ENCODE measurements at regions of chr5 and their contacts with region 1.

Region 1: GRCh38 chr5:42583322-42583721 is 160.1 kb downstream of the GHR start:
- DNase-seq: peak; percentile 78
- H3K4me3 ChIP-seq: no peak overlapping the region
- H3K27ac ChIP-seq: no peak overlapping the region
- H3K4me1 ChIP-seq: peaks cover 5% of the 10 kb centered on the region
- H3K27me3 ChIP-seq: no peaks in the 10 kb centered on the region
- CTCF ChIP-seq: peak; percentile 90 to 92

Region 2: DNA sequence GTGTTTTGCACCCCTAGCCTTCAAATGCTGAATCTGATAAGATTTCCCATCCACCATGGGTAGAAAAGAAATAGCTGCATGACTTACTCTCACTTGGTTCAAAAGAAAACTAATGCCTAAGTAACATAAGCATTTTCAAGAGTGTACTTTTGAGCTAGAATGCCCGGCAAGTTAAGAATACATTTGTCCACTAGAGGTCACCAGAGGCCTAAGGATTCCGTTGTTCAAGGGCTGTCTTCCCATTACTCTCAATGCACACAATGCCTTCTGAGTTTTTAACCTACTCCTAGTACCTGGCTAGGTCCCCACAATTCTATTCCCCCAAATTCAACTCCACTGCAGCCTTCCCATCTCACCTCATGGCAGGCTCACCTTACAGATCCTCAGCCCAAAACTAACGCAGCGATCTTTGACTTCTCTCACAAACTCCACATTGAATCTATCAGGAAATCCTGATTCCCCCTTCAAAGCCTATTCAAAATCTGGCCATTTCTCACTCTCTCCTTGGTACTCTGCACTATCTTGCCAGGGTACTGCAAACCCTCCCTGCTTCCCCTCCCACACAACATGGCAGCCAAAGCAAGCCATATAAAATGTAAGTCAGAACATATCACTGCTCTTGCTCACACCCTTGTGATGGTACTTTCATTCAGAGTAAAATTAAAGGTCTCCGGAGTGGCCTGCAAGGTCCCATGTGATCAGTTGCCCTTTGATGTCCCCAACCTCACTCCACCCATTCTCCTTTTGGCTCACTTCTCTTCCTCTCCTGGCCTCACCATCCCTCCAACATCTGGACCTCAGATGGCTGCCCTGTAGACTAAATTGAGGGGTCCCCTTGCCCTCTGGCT is 726.5 kb before region 1 on chr5:
- CTCF ChIA-PET with region 1: no interaction called
- dilution Hi-C with region 1: no loop called
- in situ Hi-C with region 1: no loop called
- intact Hi-C with region 1: loop called (anchors 10 kb)
- DNase-seq: peak; percentile 47
- H3K4me3 ChIP-seq: no peak overlapping the region
- H3K27ac ChIP-seq: no peak overlapping the region
- H3K4me1 ChIP-seq: no peaks in the 10 kb centered on the region
- H3K27me3 ChIP-seq: no peaks in the 10 kb centered on the region
- CTCF ChIP-seq: peak; percentile 74 to 78

Region 3: DNA sequence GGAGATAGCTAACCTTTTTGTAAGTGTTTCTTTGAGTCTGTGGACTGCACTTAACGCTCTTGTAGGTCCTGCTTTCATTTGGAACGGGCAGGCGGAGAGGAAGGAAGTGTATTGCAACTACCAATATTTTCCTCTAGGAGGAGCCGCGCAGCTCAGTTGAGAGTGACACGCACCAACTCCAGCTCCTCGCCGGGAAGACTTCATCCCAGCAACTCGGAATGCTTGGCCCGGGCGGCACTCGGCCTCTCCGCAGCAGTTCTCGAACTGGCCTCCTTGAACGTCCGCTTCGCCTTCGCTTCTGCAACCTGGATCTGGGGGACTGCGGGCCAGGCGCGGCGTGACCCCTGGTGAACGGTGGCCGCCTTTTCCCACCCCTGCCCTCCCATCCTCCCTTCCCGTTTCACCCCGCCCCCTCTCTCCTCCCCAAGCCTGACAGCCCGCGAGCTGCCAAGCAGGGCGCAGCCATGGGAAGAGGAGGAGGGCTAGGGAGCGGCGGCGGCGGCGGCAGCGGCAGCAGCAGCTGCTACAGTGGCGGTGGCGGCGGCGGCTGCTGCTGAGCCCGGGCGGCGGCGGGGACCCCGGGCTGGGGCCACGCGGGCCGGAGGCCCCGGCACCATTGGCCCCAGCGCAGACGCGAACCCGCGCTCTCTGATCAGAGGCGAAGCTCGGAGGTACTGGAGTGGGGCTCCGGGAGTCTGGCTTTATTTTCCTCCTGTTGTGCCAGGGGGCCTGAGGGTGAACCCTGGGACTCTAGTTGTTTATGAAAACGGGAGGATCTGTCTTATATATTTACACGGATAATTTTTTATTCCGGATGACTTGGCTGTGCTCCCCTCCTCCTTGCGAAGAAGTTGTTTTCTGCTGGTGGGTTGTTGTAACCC is 159.8 kb before region 1 on chr5 and contains the start of gene GHR:
- CTCF ChIA-PET with region 1: interaction called, 9 read pairs
- dilution Hi-C with region 1: no loop called
- in situ Hi-C with region 1: no loop called
- intact Hi-C with region 1: loop called (anchors 1 kb)
- DNase-seq: peak; percentile 84
- H3K4me3 ChIP-seq: peak within 1 kb of the TSS; percentile 49 to 81 (median 58)
- H3K27ac ChIP-seq: no peak within 1 kb of the TSS
- H3K4me1 ChIP-seq: peaks cover 17% of the 10 kb centered on the region
- H3K27me3 ChIP-seq: no peaks in the 10 kb centered on the region
- CTCF ChIP-seq: peak; percentile 48 to 75
- total RNA-seq, gene GHR: 2.8 to 5.5 TPM

Region 4: GRCh38 chr5:42522783-42523182 is 60.5 kb before region 1 on chr5:
- CTCF ChIA-PET with region 1: no interaction called
- dilution Hi-C with region 1: no loop called
- in situ Hi-C with region 1: no loop called
- intact Hi-C with region 1: no loop called
- DNase-seq: no peak
- H3K4me3 ChIP-seq: no peak overlapping the region
- H3K27ac ChIP-seq: no peak overlapping the region
- H3K4me1 ChIP-seq: no peaks in the 10 kb centered on the region
- H3K27me3 ChIP-seq: no peaks in the 10 kb centered on the region
- CTCF ChIP-seq: no peak

Region 5: GRCh38 chr5:42636425-42636824 is 53.1 kb after region 1 on chr5:
- CTCF ChIA-PET with region 1: no interaction called
- dilution Hi-C with region 1: no loop called
- in situ Hi-C with region 1: no loop called
- intact Hi-C with region 1: loop called (anchors 5 kb)
- DNase-seq: peak; percentile 9
- H3K4me3 ChIP-seq: no peak overlapping the region
- H3K27ac ChIP-seq: no peak overlapping the region
- H3K4me1 ChIP-seq: peaks cover 12% of the 10 kb centered on the region
- H3K27me3 ChIP-seq: no peaks in the 10 kb centered on the region
- CTCF ChIP-seq: peak; percentile 37 to 57

Region 6: GRCh38 chr5:42767491-42768105 is 184.3 kb after region 1 on chr5:
- CTCF ChIA-PET with region 1: interaction called, 7 read pairs
- dilution Hi-C with region 1: no loop called
- in situ Hi-C with region 1: no loop called
- intact Hi-C with region 1: loop called (anchors 10 kb)
- DNase-seq: peak; percentile 17
- H3K4me3 ChIP-seq: no peak overlapping the region
- H3K27ac ChIP-seq: no peak overlapping the region
- H3K4me1 ChIP-seq: no peaks in the 10 kb centered on the region
- H3K27me3 ChIP-seq: no peaks in the 10 kb centered on the region
- CTCF ChIP-seq: peak; percentile 28 to 48